Common myeloid progenitor, CD34-positive (primary cell): ENCODE measurements at regions of chr6 and their contacts with region 1.

Region 1: GRCh38 chr6:93423542-93423941 is 4.2 kb upstream of the EPHA7 start:
- DNase-seq: peak; percentile 59 to 74 (median 71)
- H3K4me3 ChIP-seq: no peak overlapping the region
- H3K27ac ChIP-seq: no peak overlapping the region
- H3K4me1 ChIP-seq: peaks cover 4 to 15% (median 14%) of the 10 kb centered on the region in 4 experiments
- H3K27me3 ChIP-seq: peaks cover 16 to 40% (median 20%) of the 10 kb centered on the region in 5 experiments

Region 2: GRCh38 chr6:92810913-92811312 is 612.6 kb before region 1 on chr6:
- CTCF ChIA-PET with region 1: interaction called, 10 read pairs
- POLR2A ChIA-PET with region 1: no interaction called
- DNase-seq: peak; percentile 22 to 52 (median 44)
- H3K4me3 ChIP-seq: no peak overlapping the region
- H3K27ac ChIP-seq: no peak overlapping the region
- H3K4me1 ChIP-seq: no peaks in the 10 kb centered on the region
- H3K27me3 ChIP-seq: peaks cover 0 to 4% (median 0%) of the 10 kb centered on the region in 5 experiments

Region 3: GRCh38 chr6:93036835-93037234 is 386.7 kb before region 1 on chr6:
- CTCF ChIA-PET with region 1: interaction called, 12 read pairs
- POLR2A ChIA-PET with region 1: no interaction called
- DNase-seq: peak; percentile 15 to 50 (median 50)
- H3K4me3 ChIP-seq: no peak overlapping the region
- H3K27ac ChIP-seq: no peak overlapping the region
- H3K4me1 ChIP-seq: peaks cover 6 to 25% (median 12%) of the 10 kb centered on the region in 4 experiments
- H3K27me3 ChIP-seq: no peaks in the 10 kb centered on the region